Activated T-helper 2 cell treated with anti-CD3 and anti-CD28 coated beads, Interferon-gamma antibody, Interleukin-2, Interleukin-4, amounts not matched to agents 10 μg/mL and 5 μg/mL and 100 μg/mL, durations not matched to agents 14 hours and 24 hours and 36 hours (primary cell): ENCODE measurements at regions of chr3 and their contacts with region 1.

Region 1: DNA sequence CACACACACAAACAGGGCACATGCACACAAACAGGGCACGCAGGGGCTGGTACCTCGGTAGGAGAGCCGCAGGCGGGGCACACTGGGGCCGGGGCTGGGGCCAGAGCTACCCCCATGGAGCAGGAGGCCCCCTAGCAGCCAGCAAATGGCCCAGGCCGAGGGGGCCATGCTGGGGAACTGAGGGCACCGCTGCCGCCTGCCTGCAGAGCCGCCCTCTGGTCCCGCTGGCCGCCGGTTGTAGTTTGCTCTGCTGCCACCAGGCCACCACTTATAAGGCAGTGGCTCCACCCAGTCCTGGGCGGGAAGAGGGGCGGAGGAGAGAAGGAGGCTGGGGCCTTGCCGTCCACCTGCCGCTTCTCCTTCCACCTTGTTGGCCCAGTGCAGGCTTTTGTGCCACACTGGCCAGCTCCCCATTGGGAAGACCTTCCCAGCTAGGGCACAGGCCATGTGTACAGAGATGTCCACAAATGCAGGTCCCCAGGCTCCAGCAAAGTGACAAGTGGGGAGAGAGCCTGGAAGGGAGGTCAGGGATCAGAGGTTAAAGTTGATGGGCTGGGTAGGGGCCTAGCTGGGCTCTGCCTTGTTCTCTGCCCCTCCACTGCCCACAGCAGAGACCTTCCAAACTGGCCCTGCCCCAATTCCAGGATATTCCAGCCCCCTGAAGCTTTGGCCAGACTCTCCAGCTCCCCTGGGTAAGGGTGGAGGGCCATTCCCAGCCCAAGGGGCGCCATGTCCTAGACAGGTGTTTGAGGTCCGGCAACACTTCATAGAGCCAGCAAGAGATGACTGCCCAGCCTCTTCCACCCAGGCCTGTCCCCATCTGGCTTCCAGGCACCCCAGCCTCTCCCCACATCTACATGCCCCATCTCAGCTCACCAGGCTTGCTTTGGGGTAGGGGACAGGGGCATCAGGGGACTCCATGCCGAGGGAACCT is at the start of gene SEMA3G:
- DNase-seq: peak; percentile 77
- H3K4me3 Mint-ChIP-seq: no peak within 1 kb of the TSS
- H3K27ac Mint-ChIP-seq: no peak within 1 kb of the TSS
- H3K4me1 Mint-ChIP-seq: peaks cover 12% of the 10 kb centered on the region
- H3K27me3 Mint-ChIP-seq: no peaks in the 10 kb centered on the region
- total RNA-seq, gene SEMA3G: 0.30 and 0.32 TPM in 2 replicates

Region 2: GRCh38 chr3:52220380-52221026 is 224.6 kb before region 1 on chr3:
- intact Hi-C with region 1: loop called (anchors 5 kb)
- DNase-seq: peak; percentile 77
- H3K4me3 Mint-ChIP-seq: peak overlapping the region; percentile 15
- H3K27ac Mint-ChIP-seq: no peak overlapping the region
- H3K4me1 Mint-ChIP-seq: peaks cover 57% of the 10 kb centered on the region
- H3K27me3 Mint-ChIP-seq: no peaks in the 10 kb centered on the region

Region 3: GRCh38 chr3:52407779-52408178 is 37.3 kb before region 1 on chr3:
- intact Hi-C with region 1: loop called (anchors 1 kb)
- DNase-seq: no peak
- H3K4me3 Mint-ChIP-seq: peak overlapping the region; percentile 94
- H3K27ac Mint-ChIP-seq: no peak overlapping the region
- H3K4me1 Mint-ChIP-seq: peaks cover 31% of the 10 kb centered on the region
- H3K27me3 Mint-ChIP-seq: no peaks in the 10 kb centered on the region

Region 4: DNA sequence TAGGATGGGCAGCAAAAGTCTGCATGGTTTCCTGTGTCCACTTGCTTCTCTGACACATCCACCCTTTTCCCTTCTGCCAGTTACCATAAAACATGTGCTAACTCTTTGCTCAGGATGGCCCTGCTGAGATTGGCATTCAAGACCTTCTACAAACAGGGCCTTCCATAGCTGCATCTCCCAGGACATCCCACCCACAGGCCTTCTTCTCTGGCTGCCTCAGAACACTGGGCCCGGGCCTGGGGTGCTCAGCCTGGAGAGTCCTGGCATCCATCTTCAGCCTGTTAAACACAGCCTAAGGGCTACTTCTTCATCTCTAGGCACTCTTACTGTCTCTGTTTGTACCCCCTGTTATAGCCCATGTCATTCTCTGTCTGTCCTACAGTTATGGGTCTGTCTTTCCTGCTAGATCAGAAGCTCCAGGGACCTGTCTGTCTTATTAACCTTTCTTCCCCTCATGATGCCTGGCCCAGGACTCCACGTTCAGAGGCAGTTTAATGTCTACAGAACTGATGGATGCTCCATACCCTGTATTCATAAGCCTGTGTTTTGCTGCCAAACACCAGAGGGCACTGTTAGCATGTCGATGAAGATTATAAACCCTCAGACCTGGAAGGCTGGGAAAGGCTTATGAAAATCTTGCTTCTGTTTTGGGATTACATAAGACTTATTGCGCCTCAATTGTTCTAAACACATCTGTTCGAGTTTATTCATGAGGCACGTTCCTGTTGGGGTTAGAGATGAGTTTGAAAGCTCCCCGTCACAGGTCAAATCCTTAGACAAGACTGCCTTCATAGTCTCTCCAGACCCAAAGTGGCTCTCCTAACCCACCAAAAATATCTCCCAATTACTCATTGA is 16.7 kb before region 1 on chr3:
- intact Hi-C with region 1: loop called (anchors 1 kb)
- DNase-seq: no peak
- H3K4me3 Mint-ChIP-seq: no peak overlapping the region
- H3K27ac Mint-ChIP-seq: no peak overlapping the region
- H3K4me1 Mint-ChIP-seq: peaks cover 7% of the 10 kb centered on the region
- H3K27me3 Mint-ChIP-seq: peaks cover 11% of the 10 kb centered on the region